Dorsolateral prefrontal cortex (tissue), 120 donors: ENCODE measurements at regions of chr17 and their contacts with region 1.

Region 1: GRCh38 chr17:50478391-50479381 is at the start of gene RSAD1:
- DNase-seq: peak; percentile 68 to 86 (median 80)
- H3K4me3 ChIP-seq: peak within 1 kb of the TSS; percentile 59 to 95 (median 80)
- H3K27ac ChIP-seq: peak within 1 kb of the TSS in 57 of 59 donors; percentile 15 to 95 (median 80)
- H3K27me3 ChIP-seq: no peaks in the 10 kb centered on the region
- CTCF ChIP-seq: peak; percentile 72 to 98 (median 91)
- total RNA-seq, gene RSAD1: 32.2 to 82.5 (median 54.8) TPM

Region 2: DNA sequence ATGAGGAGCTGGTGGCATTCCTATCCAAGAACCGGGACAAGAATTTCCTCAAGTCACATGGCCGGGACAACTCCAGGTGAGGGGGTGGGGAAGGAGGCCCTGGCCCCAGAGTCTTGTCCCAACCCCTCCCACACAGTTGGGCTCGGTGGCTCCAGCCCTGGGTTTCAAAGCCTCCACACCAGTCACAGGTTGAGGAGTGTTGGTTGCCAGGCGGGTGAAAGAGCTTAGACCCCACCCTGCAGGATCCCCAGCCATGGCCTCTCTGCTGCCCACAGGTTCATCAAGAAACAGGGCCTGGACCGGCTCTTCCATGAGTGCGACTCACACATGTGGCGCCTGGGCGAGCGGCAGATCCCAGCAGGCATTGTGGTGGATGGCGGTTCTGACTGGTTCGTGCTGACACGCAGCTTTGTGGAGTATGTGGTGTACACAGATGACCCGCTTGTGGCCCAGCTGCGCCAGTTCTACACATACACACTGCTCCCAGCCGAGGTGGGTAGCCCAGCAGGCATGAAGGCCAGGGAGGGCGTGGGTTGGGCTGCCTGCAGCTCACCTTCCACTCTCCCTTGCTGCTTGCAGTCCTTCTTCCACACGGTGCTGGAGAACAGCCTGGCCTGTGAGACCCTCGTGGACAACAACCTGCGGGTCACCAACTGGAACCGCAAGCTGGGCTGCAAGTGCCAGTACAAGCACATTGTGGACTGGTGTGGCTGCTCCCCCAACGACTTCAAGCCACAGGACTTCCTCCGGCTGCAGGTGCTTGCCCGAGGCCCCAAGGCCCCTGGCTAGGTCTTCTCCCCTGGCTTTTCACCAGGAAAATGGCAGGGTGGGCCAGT is 123.0 kb before region 1 on chr17:
- intact Hi-C with region 1: loop called in 1 of 2 experiments (anchors 5 kb)
- DNase-seq: peak in 1 of 10 donors; percentile 25
- H3K4me3 ChIP-seq: no peak overlapping the region
- H3K27ac ChIP-seq: no peak overlapping the region
- H3K27me3 ChIP-seq: no peaks in the 10 kb centered on the region
- CTCF ChIP-seq: no peak

Region 3: GRCh38 chr17:50534222-50534978 is 55.7 kb after region 1 on chr17:
- intact Hi-C with region 1: loop called in 1 of 2 experiments (anchors 2 kb)
- DNase-seq: no peak
- H3K4me3 ChIP-seq: peak overlapping the region in 47 of 59 donors; percentile 14 to 60 (median 39)
- H3K27ac ChIP-seq: peak overlapping the region in 27 of 59 donors; percentile 9 to 78 (median 50)
- H3K27me3 ChIP-seq: peaks cover 0 to 47% (median 16%) of the 10 kb centered on the region in 45 donors
- CTCF ChIP-seq: peak in 3 of 56 donors; percentile 4 to 17 (median 11)

Region 4: GRCh38 chr17:50626037-50626574 is 147.4 kb after region 1 on chr17:
- intact Hi-C with region 1: loop called (anchors 5 kb)
- DNase-seq: peak in 7 of 10 donors; percentile 36 to 74 (median 47)
- H3K4me3 ChIP-seq: no peak overlapping the region
- H3K27ac ChIP-seq: peak overlapping the region in 22 of 59 donors; percentile 1 to 70 (median 38)
- H3K27me3 ChIP-seq: peaks cover 0 to 9% (median 0%) of the 10 kb centered on the region in 45 donors
- CTCF ChIP-seq: peak in 55 of 56 donors; percentile 32 to 75 (median 65)

Region 5: GRCh38 chr17:50841949-50842354 is 363.3 kb after region 1 on chr17:
- intact Hi-C with region 1: loop called in 1 of 2 experiments (anchors 5 kb)
- DNase-seq: peak in 9 of 10 donors; percentile 77 to 87 (median 84)
- H3K4me3 ChIP-seq: peak overlapping the region in 1 of 59 donors; percentile 8
- H3K27ac ChIP-seq: peak overlapping the region in 26 of 59 donors; percentile 2 to 90 (median 56)
- H3K27me3 ChIP-seq: no peaks in the 10 kb centered on the region
- CTCF ChIP-seq: peak; percentile 43 to 97 (median 89)

Region 6: GRCh38 chr17:50893183-50893993 is 414.7 kb after region 1 on chr17:
- intact Hi-C with region 1: no loop called
- DNase-seq: peak in 8 of 10 donors; percentile 53 to 83 (median 66)
- H3K4me3 ChIP-seq: peak overlapping the region in 23 of 59 donors; percentile 1 to 35 (median 10)
- H3K27ac ChIP-seq: peak overlapping the region; percentile 31 to 97 (median 87)
- H3K27me3 ChIP-seq: no peaks in the 10 kb centered on the region
- CTCF ChIP-seq: peak in 1 of 56 donors; percentile 10